ENCODE measurements at regions of chr5 and their contacts with region 1.

Region 1: DNA sequence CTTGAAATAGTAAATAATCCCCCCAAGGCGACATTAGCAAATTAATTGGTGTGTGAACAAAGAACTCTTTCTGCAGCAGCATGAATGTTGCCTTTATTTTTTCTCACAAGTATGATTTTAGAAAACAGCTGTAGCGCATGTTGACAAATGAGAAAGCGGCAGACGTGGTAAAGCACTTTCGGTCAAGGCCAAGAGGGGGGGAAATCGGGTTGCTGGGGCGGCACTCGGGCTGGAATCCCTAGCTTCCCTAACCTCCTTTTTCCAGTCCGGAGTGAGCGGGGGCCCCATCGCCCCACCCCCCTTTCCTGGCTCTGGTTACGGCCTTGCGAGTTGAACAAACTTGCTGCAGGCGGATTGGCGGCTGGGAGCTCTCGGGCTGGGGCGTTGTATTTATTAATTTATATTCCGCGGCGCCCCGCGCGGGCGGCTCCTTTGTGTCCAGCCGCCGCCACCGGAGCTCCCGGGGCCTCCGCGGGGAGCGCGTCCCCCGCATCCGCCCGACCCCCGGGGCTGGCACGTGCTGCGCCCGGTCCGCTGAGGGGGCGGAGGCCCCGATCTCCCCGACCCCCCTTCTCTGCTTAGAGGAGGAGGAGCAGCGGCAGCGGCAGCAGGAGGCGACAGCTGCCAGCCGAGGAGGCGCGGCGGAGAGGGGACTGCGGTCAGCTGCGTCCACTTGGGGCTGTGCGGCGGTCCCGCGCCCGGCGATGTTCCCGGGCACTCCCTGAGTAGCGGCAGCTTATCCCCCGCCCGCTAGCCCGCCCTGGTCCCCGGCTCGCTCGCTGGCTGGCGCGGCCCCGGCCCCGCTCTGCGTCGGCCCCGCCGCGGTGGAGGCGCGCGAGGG is at the start of gene RHOBTB3:
- DNase-seq: peak; percentile 64

Region 2: DNA sequence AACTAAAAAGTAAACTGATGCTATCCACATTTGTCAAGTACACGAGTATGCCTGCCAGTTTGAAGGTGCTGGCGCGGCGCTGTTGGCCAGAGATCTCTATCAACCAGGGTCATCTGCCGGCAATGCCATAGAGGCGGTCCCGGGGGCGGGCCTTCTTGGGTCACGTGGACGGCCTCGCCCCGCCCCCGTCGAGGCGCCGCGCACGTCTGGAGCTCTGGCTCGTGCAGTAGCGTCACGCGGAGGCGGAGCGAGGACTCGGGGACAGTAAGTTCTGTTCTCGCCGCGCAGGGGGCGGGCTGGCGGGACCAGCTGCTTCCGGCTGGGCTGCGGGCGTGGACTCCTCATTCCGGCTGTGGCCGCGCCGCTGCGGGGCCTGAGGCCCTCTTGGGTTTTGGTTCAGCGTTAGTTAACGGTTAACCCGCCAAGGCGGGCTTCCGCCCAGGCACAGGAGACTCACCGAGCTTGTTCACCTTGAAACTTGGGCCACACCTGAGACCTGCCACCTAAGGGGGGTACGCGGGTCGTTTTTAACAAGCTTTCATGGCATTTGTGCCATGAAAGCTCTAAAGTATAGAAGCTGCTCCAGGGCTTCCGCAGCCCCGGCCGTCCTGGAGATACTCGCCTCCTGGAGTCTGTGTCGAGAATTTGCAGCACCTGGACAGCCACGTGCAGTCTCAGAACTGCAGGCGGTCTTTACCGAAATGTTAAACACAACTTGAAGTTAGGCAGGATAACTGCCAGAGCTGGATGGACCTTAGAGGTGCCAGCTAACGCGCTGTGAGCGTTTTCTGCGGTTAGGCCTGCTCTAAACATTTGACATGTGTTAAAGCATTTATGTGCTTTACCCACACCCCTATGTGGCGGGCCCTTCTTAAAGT is 84.2 kb before region 1 on chr5 and contains the start of gene RFESD:
- CTCF ChIA-PET with region 1: interaction called, 3 read pairs
- POLR2A ChIA-PET with region 1: interaction called, 29 read pairs
- DNase-seq: peak; percentile 96

Region 3: DNA sequence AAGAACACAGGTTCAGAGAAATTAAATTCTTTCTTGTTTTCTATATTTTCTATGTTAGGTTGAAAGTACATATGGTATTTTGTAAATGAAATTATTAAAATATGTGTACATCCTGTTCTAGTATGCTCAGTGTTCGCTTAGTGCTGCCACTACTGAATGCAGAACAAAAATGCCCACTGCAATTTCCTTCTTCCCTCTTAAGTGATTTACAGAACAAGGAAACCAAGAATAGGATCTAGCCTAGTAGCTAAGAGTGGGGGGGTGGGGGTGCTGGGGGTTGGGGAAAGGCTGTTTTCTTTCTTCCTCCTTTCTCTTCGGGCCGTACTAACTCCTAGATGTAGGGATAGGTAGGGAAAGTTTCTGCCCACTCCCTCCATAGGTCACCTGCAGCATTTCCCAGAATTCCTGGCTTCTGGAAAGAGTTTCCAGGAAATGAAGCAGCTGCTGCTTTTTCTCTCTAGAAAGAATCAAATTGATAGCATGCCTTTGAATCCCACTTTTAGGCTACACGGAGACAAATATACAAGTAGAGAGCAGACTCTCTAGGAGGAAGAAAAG is 63.8 kb before region 1 on chr5:
- CTCF ChIA-PET with region 1: interaction called, 3 read pairs
- POLR2A ChIA-PET with region 1: interaction called, 14 read pairs
- DNase-seq: no peak

Region 4: GRCh38 chr5:95697781-95698681 is 32.9 kb before region 1 on chr5:
- CTCF ChIA-PET with region 1: no interaction called
- POLR2A ChIA-PET with region 1: interaction called, 23 read pairs
- DNase-seq: peak; percentile 40

Region 5: DNA sequence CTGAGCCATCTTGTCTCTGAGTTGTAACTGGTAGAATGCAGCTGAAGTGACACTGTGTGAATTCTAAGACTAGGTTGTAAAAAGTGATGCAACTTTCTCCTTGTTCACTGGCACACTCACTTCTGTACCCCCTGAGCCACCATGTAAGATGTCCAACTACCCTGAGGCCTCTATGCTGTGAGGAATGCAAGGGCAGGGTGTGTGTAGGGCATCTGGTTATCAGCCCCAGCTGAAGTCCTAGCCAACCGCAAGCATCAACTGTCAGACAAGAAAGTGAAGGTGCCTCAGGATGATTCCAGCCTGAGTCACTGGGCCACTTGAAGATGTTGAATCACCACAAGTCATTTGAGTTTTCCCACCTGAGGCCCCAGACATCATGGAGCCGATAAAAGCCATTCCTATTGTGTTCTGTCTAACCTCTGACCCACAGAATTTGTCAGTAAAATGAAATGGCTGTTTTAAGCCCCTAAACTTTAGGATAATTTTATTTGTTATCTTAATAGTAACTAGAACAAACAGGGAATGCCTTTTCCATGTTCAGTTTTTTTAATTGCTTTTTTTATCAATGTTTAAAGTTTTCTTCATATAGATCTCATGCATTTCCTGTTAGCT is 18.5 kb before region 1 on chr5:
- CTCF ChIA-PET with region 1: interaction called, 4 read pairs
- POLR2A ChIA-PET with region 1: interaction called, 46 read pairs
- DNase-seq: no peak

Region 6: GRCh38 chr5:95754545-95754944 is 23.6 kb after region 1 on chr5:
- CTCF ChIA-PET with region 1: no interaction called
- POLR2A ChIA-PET with region 1: no interaction called
- DNase-seq: no peak

Region 7: GRCh38 chr5:95857185-95857945 is 126.4 kb after region 1 on chr5:
- CTCF ChIA-PET with region 1: no interaction called
- POLR2A ChIA-PET with region 1: no interaction called
- DNase-seq: no peak